Gastrocnemius medialis (tissue), 4 donors: ENCODE measurements at regions of chr3 and their contacts with region 1.

Region 1: GRCh38 chr3:126100634-126101301 is 16.8 kb upstream of the SLC41A3 start:
- DNase-seq: peak; percentile 49 to 74
- ATAC-seq: peak; percentile 72 to 76
- H3K4me3 ChIP-seq: peak overlapping the region in 3 of 4 donors; percentile 31 to 42 (median 32)
- H3K27ac ChIP-seq: peak overlapping the region; percentile 84 to 87 (median 84)
- H3K4me1 ChIP-seq: peaks cover 64 to 65% of the 10 kb centered on the region in 2 donors
- H3K27me3 ChIP-seq: no peaks in the 10 kb centered on the region
- CTCF ChIP-seq: no peak
- POLR2A ChIP-seq: peak; percentile 33 to 61

Region 2: DNA sequence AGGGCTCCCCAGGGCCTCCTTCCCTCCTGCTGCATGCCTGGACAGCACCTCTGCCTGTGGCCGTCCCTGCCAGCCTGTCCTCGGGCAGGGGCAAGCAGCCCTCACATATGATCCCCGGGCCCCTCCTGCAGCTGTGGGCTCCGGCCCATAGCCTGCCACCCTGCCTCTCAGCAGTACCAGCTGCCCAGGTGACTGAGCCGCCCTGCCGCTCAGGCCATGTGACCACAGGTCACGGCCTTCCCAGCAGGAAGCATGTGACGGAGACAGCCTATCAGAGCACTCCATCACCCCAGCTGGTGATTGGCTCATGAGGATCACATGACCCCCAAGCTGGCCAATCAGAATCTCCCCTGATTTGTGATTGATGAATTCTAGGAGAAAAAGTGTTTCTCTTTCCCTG is 55.7 kb after region 1 on chr3:
- in situ Hi-C with region 1: no loop called
- intact Hi-C with region 1: loop called (anchors 2 kb)
- DNase-seq: no peak
- ATAC-seq: peak in 1 of 2 donors; percentile 31
- H3K4me3 ChIP-seq: no peak overlapping the region
- H3K27ac ChIP-seq: no peak overlapping the region
- H3K4me1 ChIP-seq: peaks cover 0 to 5% of the 10 kb centered on the region in 2 donors
- H3K27me3 ChIP-seq: no peaks in the 10 kb centered on the region
- CTCF ChIP-seq: no peak
- POLR2A ChIP-seq: no peak

Region 3: DNA sequence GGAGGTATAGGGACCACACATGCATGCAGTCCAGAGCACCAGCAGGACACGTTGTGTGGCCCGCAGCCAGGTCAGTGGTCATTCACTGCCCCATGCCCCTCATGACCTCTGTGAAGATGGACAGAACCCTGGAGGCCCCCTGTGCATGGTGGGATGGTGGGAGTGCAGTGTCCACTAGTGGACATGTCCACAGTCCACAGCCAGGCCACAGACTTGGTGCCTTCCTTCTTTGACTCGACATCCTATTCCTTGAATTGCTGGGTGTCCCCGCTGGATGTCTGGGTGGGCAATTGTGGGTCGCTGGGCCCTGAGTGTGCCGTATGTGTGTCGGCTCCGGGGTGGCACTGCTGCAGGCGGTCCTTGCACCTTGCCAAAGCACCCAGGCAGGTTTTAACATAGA is 220.7 kb after region 1 on chr3:
- in situ Hi-C with region 1: no loop called
- intact Hi-C with region 1: no loop called
- DNase-seq: no peak
- ATAC-seq: peak in 1 of 2 donors; percentile 24
- H3K4me3 ChIP-seq: no peak overlapping the region
- H3K27ac ChIP-seq: no peak overlapping the region
- H3K4me1 ChIP-seq: no peaks in the 10 kb centered on the region
- H3K27me3 ChIP-seq: no peaks in the 10 kb centered on the region
- CTCF ChIP-seq: no peak
- POLR2A ChIP-seq: no peak